GM12878 (cell line): ENCODE measurements at regions of chr1 and their contacts with region 1.

Region 1: DNA sequence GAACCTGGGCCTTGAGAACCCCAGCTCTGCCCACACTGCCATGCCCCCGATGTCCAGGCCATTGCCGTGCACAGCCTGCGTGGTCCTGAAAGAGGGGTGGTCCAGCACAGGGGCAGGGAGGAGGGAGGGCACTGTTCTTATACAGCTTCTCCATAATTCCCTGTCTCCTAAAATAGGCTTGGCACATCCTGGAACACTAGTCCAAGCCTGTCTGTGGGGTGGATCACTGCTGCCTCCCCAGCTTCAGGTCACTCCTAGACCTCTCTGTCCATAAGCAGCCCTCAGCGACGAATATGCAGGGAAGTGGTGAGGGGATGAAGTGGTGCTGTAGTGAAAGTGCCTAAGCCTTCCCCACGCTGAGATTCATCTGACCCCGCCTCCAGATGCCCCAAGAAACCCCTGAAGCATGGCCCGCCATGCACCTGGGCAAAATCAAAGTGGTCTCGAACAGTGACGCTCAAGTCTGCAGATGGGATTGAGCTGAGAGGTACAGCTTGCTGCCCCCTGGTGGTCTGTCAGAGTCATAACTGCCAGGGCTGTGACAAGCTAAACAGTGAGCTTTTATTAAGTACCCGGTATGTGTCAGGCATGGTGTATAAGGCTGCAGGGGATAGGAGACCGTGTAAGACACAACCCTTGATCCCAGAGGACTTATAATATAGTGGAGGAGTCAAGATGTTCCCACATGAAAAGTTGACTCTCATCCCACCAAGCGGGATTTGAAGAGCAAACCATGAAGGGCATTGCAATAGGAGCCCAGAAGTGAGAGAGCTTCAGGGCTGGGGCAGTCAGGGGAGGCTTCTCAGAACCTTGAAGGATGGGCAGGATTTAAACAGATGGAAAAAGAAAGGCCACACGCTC is 66.6 kb downstream of the FAM163A start:
- DNase-seq: peak; percentile 26
- ATAC-seq: peak; percentile 75
- H3K4me3 ChIP-seq: no peak overlapping the region
- H3K27ac ChIP-seq: no peak overlapping the region
- H3K4me1 ChIP-seq: peaks cover 3% of the 10 kb centered on the region; the same call in 1 of the 2 replicates
- H3K27me3 ChIP-seq: peaks cover 0 to 4% of the 10 kb centered on the region in 2 experiments; a peak in 2 of 4 replicates
- CTCF ChIP-seq: peak; percentile 80 to 94 (median 89)
- EP300 ChIP-seq: no peak
- POLR2A ChIP-seq: no peak
- RAD21 ChIP-seq: peak; percentile 73

Region 2: DNA sequence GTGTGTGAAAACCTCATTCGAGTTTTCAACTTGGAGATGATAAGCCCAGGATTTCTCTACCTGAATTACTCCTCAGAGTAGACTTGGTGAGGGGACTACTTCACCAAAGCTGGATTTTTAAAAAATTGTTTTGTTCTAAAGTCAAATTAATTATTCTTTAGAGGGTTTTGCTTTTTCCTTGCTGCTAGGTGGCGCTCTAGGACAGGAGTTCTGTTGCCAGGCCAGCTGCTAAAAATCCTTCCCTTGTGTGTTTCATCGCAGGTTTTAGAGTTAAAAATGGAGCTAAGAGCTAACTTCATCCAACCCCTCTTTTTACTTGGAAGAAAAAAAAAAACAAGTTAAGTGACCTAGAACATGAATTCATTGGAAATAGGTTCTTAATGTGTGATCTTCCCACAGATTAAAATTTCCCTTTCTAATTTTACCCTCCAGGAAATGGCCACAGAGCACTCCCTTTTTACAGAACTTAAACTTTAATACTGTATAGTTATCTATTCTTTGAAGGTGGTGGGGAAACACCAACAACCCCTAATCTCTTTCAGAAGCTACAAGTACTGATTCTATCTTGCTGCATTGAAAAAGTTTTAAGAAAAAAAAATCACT is 103.3 kb before region 1 on chr1:
- CTCF ChIA-PET with region 1: interaction called, 938 read pairs
- POLR2A ChIA-PET with region 1: interaction called, 8 read pairs
- RAD21 ChIA-PET with region 1: interaction called, 474 read pairs
- SMC1A ChIA-PET with region 1: interaction called, 295 read pairs
- in situ Hi-C with region 1: no loop called
- intact Hi-C with region 1: loop called (anchors 1 kb)
- DNase-seq: no peak
- ATAC-seq: peak; percentile 42
- H3K4me3 ChIP-seq: no peak overlapping the region
- H3K27ac ChIP-seq: no peak overlapping the region
- H3K4me1 ChIP-seq: no peaks in the 10 kb centered on the region
- H3K27me3 ChIP-seq: no peaks in the 10 kb centered on the region
- CTCF ChIP-seq: peak; percentile 63 to 81 (median 76)
- EP300 ChIP-seq: no peak
- POLR2A ChIP-seq: no peak
- RAD21 ChIP-seq: peak; percentile 93

Region 3: DNA sequence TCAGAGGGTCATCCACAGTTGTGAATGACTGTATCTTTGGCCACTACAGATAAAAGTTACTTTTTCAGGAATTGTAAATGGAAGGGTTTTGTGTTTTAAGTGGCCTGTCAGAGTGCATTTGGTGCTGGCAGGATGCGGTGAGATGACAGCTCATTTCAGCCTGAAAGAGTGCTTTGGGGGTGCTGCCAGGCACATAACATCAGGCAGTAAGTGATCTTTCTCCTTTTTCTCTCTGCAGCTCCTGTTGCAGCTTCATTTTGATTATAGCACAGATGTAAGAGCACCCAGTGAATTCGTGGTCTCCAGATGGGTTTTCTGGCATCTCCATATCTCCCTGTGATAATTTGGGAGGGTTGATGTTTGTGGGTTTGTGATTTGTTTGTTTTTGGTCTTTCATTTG is 81.5 kb before region 1 on chr1:
- CTCF ChIA-PET with region 1: interaction called, 30 read pairs
- POLR2A ChIA-PET with region 1: no interaction called
- RAD21 ChIA-PET with region 1: interaction called, 6 read pairs
- SMC1A ChIA-PET with region 1: interaction called, 23 read pairs
- in situ Hi-C with region 1: no loop called
- intact Hi-C with region 1: no loop called
- DNase-seq: no peak
- ATAC-seq: peak; percentile 54
- H3K4me3 ChIP-seq: no peak overlapping the region
- H3K27ac ChIP-seq: no peak overlapping the region
- H3K4me1 ChIP-seq: no peaks in the 10 kb centered on the region
- H3K27me3 ChIP-seq: no peaks in the 10 kb centered on the region; a peak in 1 of 4 replicates
- CTCF ChIP-seq: no peak
- EP300 ChIP-seq: no peak
- POLR2A ChIP-seq: no peak
- RAD21 ChIP-seq: no peak

Region 4: DNA sequence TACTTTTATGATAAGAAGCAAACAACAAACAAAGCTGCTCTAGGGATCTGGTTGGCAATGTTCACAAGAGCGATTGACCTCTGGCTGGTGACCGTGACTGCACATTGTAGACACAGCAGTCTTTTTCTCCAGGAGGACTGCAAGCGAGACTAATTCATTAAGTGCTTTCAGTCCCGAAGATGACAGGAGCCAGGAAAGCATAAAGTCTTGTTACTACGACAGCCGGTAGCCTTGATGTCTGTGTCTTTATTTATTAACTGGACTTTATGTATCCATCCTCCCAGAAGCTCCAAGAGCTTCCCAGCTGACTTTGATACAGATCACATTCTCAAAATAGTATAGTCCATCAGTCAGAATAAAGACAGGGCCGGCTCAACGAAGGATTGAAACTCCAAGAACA is 48.4 kb before region 1 on chr1:
- CTCF ChIA-PET with region 1: interaction called, 20 read pairs
- POLR2A ChIA-PET with region 1: no interaction called
- RAD21 ChIA-PET with region 1: interaction called, 9 read pairs
- SMC1A ChIA-PET with region 1: interaction called, 6 read pairs
- in situ Hi-C with region 1: no loop called
- intact Hi-C with region 1: no loop called
- DNase-seq: no peak
- ATAC-seq: no peak
- H3K4me3 ChIP-seq: no peak overlapping the region
- H3K27ac ChIP-seq: no peak overlapping the region
- H3K4me1 ChIP-seq: no peaks in the 10 kb centered on the region
- H3K27me3 ChIP-seq: no peaks in the 10 kb centered on the region; a peak in 1 of 4 replicates
- CTCF ChIP-seq: no peak
- EP300 ChIP-seq: no peak
- POLR2A ChIP-seq: no peak
- RAD21 ChIP-seq: no peak

Region 5: DNA sequence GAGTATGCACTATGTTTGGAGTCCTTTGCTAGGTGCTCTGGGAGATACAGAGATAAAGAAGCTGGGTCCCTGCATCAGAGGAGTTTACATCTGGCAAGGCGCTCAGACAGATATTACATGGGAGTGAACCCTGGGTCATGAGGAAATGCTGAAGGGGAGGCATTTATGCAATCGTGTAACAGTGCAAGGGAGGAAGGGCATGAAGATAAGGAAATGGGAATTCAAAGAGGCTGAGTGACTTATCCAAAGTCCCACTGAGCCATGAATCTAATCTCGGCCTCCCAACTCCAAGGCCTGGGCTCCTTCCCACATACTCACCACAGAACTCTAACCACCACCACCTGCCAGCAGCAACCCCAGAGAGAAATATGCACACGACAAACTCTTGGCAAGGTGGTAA is 15.1 kb before region 1 on chr1:
- CTCF ChIA-PET with region 1: interaction called, 60 read pairs
- POLR2A ChIA-PET with region 1: no interaction called
- RAD21 ChIA-PET with region 1: interaction called, 16 read pairs
- SMC1A ChIA-PET with region 1: interaction called, 13 read pairs
- in situ Hi-C with region 1: no loop called
- intact Hi-C with region 1: no loop called
- DNase-seq: no peak
- ATAC-seq: no peak
- H3K4me3 ChIP-seq: no peak overlapping the region
- H3K27ac ChIP-seq: no peak overlapping the region
- H3K4me1 ChIP-seq: no peaks in the 10 kb centered on the region
- H3K27me3 ChIP-seq: no peaks in the 10 kb centered on the region; a peak in 1 of 4 replicates
- CTCF ChIP-seq: no peak
- EP300 ChIP-seq: no peak
- POLR2A ChIP-seq: no peak
- RAD21 ChIP-seq: no peak

Region 6: DNA sequence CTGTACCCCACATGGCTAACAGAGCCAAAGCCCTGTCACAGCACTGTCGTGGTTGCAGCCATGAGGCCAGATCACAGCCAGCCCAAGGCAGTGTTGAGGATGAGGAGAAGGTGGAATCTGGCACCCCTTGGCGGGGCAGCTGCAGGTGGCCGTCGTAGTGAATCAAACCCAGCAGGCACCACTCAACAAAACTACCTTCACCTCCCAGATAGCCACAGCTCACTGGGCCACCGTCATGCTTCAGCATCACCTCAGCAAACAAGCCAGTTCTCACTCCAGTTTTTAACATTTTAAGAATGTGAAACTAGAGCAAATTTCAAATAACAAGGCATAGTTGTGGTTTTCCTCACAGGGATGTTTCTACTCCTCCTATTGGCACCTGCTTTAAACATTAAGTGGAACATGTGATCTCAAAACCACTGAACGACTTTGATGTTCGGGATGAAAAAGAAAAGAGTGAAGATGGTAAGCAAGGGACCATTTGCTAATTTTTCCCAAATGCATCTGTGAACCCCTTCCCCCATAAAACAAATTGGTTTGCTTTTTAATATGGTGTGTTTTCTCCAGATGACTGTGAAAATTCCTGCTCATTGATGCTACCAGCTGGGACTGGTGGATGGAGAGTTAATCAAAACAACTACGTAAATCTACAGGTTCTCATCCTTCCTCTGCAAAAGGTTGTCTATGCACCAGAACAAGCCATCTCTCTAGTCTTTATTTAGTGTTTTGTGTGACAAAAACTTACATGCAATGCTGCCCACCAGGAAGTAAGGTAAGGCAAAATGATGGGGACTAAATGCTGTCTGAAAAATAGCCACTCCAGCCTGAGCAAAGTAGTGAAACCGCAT is 22.3 kb after region 1 on chr1:
- CTCF ChIA-PET with region 1: interaction called, 33 read pairs
- POLR2A ChIA-PET with region 1: no interaction called
- RAD21 ChIA-PET with region 1: interaction called, 10 read pairs
- SMC1A ChIA-PET with region 1: interaction called, 3 read pairs
- in situ Hi-C with region 1: no loop called
- intact Hi-C with region 1: no loop called
- DNase-seq: no peak
- ATAC-seq: peak; percentile 40
- H3K4me3 ChIP-seq: no peak overlapping the region
- H3K27ac ChIP-seq: no peak overlapping the region
- H3K4me1 ChIP-seq: peaks cover 3% of the 10 kb centered on the region; the same call in 1 of the 2 replicates
- H3K27me3 ChIP-seq: no peaks in the 10 kb centered on the region
- CTCF ChIP-seq: no peak
- EP300 ChIP-seq: no peak
- POLR2A ChIP-seq: no peak
- RAD21 ChIP-seq: no peak

Region 7: DNA sequence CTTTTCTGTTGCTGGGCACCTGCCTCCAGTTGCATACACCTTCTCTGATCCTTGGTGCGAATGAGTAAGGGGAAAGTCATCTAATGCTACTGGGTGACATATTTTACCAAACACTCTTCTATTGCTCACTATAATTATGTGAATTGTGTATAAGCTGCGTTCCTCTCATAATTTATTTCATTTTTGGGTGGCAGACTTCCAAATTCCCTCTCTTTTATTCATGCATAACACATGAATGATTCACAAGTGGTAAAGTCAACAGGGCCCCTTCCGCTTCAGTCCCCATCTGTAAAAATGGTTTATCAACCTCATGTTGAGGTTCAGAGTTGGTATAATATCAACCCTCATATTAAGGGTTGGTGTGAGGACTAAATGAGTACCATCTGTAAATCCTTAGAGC is 341.8 kb after region 1 on chr1:
- CTCF ChIA-PET with region 1: no interaction called
- POLR2A ChIA-PET with region 1: no interaction called
- RAD21 ChIA-PET with region 1: no interaction called
- SMC1A ChIA-PET with region 1: no interaction called
- in situ Hi-C with region 1: no loop called
- intact Hi-C with region 1: no loop called
- DNase-seq: no peak
- ATAC-seq: no peak
- H3K4me3 ChIP-seq: no peak overlapping the region
- H3K27ac ChIP-seq: no peak overlapping the region
- H3K4me1 ChIP-seq: peaks cover 11% of the 10 kb centered on the region; the same call in 1 of the 2 replicates
- H3K27me3 ChIP-seq: no peaks in the 10 kb centered on the region
- CTCF ChIP-seq: no peak
- EP300 ChIP-seq: no peak
- POLR2A ChIP-seq: no peak
- RAD21 ChIP-seq: no peak